Activated naive CD4-positive, alpha-beta T cell treated with anti-CD3 and anti-CD28 coated beads for 36 hours (primary cell): ENCODE measurements at regions of chr18 and their contacts with region 1.

Region 1: DNA sequence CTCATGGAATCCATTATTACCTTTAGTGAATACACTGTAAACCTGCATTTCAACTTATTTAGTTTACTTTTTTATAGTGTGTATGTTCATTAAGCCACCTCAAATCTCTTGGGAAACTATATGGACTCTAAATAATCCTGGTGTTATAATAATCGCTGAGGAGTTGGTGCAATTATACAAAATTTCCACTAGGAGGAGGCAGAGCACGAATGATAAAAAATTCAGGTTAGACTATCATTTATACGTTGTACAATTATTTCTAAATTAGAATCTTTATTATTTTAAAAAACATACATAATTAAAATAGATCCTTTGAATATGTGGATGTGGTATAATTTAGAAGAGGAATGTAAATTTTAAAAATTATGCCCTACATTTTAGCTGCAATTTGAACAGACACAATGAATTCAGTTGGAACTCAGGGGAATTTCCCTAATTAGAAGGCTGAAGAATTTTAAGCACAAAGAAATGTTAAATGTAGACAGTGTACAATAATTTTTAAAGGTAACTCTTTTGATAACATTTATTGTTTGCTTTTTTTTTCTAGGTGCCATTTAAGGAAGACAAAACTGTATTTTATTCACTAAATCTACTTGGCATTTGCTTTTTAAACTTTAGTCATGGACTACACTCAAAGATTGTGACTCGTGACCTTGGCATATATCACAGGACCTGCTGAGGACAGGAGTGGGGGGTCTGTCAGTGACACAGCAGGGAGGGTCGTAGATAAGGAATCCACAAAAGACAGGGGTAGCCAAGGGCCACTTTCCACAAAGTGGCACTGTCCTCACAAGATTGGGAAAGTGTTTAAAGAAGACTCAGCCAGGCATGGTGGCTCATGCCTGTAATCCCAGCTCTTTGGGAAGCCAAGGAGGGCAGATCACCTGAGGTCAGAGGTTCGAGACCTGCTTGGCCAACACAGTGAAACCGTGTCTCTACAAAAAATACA is 45.5 kb downstream of the RAB12 start:
- DNase-seq: no peak
- H3K4me3 Mint-ChIP-seq: no peak overlapping the region
- H3K27ac Mint-ChIP-seq: no peak overlapping the region
- H3K4me1 Mint-ChIP-seq: no peaks in the 10 kb centered on the region
- H3K27me3 Mint-ChIP-seq: peaks cover 7% of the 10 kb centered on the region

Region 2: DNA sequence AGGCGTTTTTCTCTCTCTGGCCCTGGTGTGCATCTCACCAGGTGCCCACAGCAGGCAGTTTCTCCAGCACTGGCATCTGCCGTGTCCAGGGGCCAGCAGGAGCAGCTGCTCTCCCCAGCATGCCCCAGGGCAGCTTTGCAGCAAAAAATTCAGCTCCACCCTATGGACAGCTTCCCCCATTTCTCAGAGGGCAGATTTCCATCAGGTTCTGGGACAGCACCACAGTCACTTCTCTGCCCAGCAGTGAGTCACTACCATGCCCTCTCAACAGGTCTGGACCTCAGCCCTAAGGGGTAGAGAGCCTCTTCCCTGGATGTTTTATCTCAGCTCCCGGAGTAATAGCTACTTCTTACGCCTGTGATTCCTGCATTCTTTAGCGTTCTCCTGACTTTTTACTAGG is 215.7 kb before region 1 on chr18:
- CTCF ChIA-PET with region 1: no interaction called
- intact Hi-C with region 1: no loop called
- DNase-seq: no peak
- H3K4me3 Mint-ChIP-seq: no peak overlapping the region
- H3K27ac Mint-ChIP-seq: no peak overlapping the region
- H3K4me1 Mint-ChIP-seq: no peaks in the 10 kb centered on the region
- H3K27me3 Mint-ChIP-seq: no peaks in the 10 kb centered on the region

Region 3: DNA sequence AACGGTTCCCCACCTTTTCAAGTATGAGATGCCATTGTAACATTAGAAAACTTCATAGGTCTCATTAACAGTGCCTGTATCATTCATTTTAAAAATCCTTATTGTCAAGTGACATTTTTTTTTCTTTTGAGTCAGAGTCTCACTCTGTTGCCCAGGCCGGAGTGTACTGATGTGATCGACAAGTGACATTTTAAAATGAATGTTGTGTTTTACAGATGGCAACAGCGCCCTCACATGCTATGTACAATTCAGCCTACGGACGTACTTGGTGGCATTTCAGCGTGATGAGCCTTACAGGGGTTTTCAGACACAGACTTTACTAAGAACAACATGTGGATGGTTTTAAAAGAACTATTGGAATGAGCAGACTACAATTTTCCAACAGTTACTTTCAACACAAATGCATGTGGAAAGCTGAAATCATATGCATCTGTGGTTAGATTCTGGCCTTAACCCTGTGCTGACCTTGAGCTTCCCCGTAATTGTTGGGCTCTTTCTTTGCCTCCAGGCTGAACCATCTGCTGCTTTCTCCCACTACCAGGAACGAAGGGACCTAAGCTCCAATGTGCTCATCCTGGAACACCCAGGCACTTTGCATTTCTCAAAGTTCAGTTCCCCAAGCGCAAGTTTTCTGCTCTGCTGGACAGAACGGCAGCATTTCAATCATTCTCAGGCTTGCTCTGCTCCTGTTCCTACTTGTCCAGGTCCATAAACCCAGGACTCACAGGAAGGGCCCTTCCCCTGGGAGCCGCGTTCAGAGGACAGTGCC is 327.8 kb after region 1 on chr18:
- CTCF ChIA-PET with region 1: interaction called, 35 read pairs
- intact Hi-C with region 1: loop called (anchors 1 kb)
- DNase-seq: peak; percentile 55
- H3K4me3 Mint-ChIP-seq: no peak overlapping the region
- H3K27ac Mint-ChIP-seq: no peak overlapping the region
- H3K4me1 Mint-ChIP-seq: no peaks in the 10 kb centered on the region
- H3K27me3 Mint-ChIP-seq: no peaks in the 10 kb centered on the region

Region 4: GRCh38 chr18:8988261-8988871 is 333.6 kb after region 1 on chr18:
- CTCF ChIA-PET with region 1: interaction called, 35 read pairs
- intact Hi-C with region 1: loop called (anchors 1 kb)
- DNase-seq: peak; percentile 71
- H3K4me3 Mint-ChIP-seq: no peak overlapping the region
- H3K27ac Mint-ChIP-seq: no peak overlapping the region
- H3K4me1 Mint-ChIP-seq: no peaks in the 10 kb centered on the region
- H3K27me3 Mint-ChIP-seq: peaks cover 6% of the 10 kb centered on the region